ENCODE measurements at regions of chr2 and their contacts with region 1.

Region 1: GRCh38 chr2:71716781-71717624 is 263.6 kb downstream of the DYSF start:
- DNase-seq: peak; percentile 94 to 98
- ATAC-seq: peak; percentile 89
- H3K4me3 ChIP-seq: no peak overlapping the region
- H3K27ac ChIP-seq: peak overlapping the region; percentile 88 to 90
- H3K4me1 ChIP-seq: peaks cover 10 to 13% of the 10 kb centered on the region in 2 donors
- H3K27me3 ChIP-seq: no peaks in the 10 kb centered on the region

Region 2: GRCh38 chr2:71563872-71564271 is 153.1 kb before region 1 on chr2:
- intact Hi-C with region 1: loop called in 1 of 2 experiments (anchors 10 kb)
- DNase-seq: peak in 1 of 2 donors; percentile 42
- ATAC-seq: no peak
- H3K4me3 ChIP-seq: no peak overlapping the region
- H3K27ac ChIP-seq: no peak overlapping the region
- H3K4me1 ChIP-seq: no peaks in the 10 kb centered on the region
- H3K27me3 ChIP-seq: no peaks in the 10 kb centered on the region

Region 3: GRCh38 chr2:71675296-71675695 is 41.7 kb before region 1 on chr2:
- intact Hi-C with region 1: no loop called
- DNase-seq: peak in 1 of 2 donors; percentile 48
- ATAC-seq: no peak
- H3K4me3 ChIP-seq: no peak overlapping the region
- H3K27ac ChIP-seq: no peak overlapping the region
- H3K4me1 ChIP-seq: no peaks in the 10 kb centered on the region
- H3K27me3 ChIP-seq: no peaks in the 10 kb centered on the region

Measured in aorta (tissue), 5 donors.